ENCODE measurements at regions of chr18 and their contacts with region 1.

Region 1: DNA sequence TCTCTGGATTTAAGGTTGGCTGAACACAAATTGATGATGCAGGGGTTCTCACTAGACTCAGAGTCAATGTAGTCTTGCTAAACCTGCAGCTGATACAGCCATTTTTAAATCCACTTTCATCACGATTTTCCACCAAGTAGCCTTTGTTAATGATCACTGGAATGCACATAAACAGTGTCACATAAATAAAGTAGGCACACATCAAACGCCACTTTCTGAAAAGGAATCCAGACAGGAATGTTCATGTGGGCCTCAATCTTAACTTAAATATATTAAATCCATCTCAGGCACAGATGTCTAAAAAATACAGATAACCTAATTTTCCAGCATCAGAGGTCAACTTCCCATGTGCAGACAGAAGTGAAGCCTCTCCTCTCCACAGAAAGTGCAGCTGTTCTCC is 58.3 kb downstream of the LAMA1 start:
- H3K4me3 Mint-ChIP-seq: no peak overlapping the region
- H3K27ac Mint-ChIP-seq: no peak overlapping the region
- H3K4me1 Mint-ChIP-seq: no peaks in the 10 kb centered on the region
- H3K27me3 Mint-ChIP-seq: no peaks in the 10 kb centered on the region

Region 2: GRCh38 chr18:5646739-5647138 is 1412.5 kb before region 1 on chr18:
- intact Hi-C with region 1: loop called (anchors 10 kb)
- H3K4me3 Mint-ChIP-seq: no peak overlapping the region
- H3K27ac Mint-ChIP-seq: no peak overlapping the region
- H3K4me1 Mint-ChIP-seq: no peaks in the 10 kb centered on the region
- H3K27me3 Mint-ChIP-seq: peaks cover 6% of the 10 kb centered on the region

Region 3: GRCh38 chr18:7000484-7001096 is 58.7 kb before region 1 on chr18:
- intact Hi-C with region 1: no loop called
- H3K4me3 Mint-ChIP-seq: no peak overlapping the region
- H3K27ac Mint-ChIP-seq: no peak overlapping the region
- H3K4me1 Mint-ChIP-seq: no peaks in the 10 kb centered on the region
- H3K27me3 Mint-ChIP-seq: no peaks in the 10 kb centered on the region

Region 4: GRCh38 chr18:7038330-7038851 is 20.9 kb before region 1 on chr18:
- intact Hi-C with region 1: loop called (anchors 1 kb)
- H3K4me3 Mint-ChIP-seq: no peak overlapping the region
- H3K27ac Mint-ChIP-seq: no peak overlapping the region
- H3K4me1 Mint-ChIP-seq: no peaks in the 10 kb centered on the region
- H3K27me3 Mint-ChIP-seq: no peaks in the 10 kb centered on the region